Activated naive CD4-positive, alpha-beta T cell treated with anti-CD3 and anti-CD28 coated beads for 36 hours (primary cell): ENCODE measurements at regions of chr5 and their contacts with region 1.

Region 1: DNA sequence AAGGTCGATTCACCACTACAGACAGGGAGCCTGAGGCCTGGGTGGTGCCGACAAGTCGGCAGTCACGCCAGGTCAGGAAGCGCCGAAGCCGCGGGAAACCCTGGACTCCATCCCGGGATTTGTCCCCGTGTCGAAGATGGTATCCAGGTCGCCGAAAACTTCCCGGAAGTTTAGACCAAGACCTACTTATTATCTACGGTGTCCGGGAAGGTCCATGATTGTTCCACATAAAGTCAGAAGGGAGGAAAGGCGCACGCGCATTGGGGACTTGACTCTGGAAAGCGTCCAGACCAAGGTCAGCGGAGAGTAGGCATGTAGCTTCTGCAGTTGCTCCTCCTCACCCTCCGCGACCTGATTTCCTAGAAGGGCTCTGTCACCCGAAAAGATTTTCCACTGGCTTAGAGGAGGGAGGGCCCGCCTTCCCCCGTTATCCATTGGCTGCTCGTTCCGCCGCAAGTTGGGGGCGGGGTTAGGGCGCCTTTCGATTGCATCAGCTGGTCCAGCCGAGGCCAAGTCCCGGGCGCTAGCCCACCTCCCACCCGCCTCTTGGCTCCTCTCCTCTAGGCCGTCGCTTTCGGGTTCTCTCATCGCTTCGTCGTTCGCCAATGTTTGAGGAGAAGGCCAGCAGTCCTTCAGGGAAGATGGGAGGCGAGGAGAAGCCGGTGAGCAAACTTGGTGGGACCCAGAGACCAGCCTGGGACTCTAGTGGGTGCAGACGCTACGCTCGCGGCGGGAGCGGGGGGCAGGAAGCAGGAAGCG is at the start of gene TARS1:
- DNase-seq: peak; percentile 96
- H3K4me3 Mint-ChIP-seq: no peak within 1 kb of the TSS
- H3K27ac Mint-ChIP-seq: no peak within 1 kb of the TSS
- H3K4me1 Mint-ChIP-seq: peaks cover 29% of the 10 kb centered on the region
- H3K27me3 Mint-ChIP-seq: no peaks in the 10 kb centered on the region
- total RNA-seq, gene TARS1: 244 to 260 TPM

Region 2: GRCh38 chr5:31531888-31532710 is 1908.6 kb before region 1 on chr5 and contains the starts of genes C5orf22 and DROSHA:
- CTCF ChIA-PET with region 1: no interaction called
- intact Hi-C with region 1: loop called (anchors 1 kb)
- DNase-seq: peak; percentile 95
- H3K4me3 Mint-ChIP-seq: peak within 1 kb of the TSS; percentile 87
- H3K27ac Mint-ChIP-seq: peak within 1 kb of the TSS; percentile 80
- H3K4me1 Mint-ChIP-seq: peaks cover 41% of the 10 kb centered on the region
- H3K27me3 Mint-ChIP-seq: no peaks in the 10 kb centered on the region
- total RNA-seq, gene C5orf22: 23.7 to 25.5 TPM
- total RNA-seq, gene DROSHA: 60.7 to 60.9 TPM

Region 3: GRCh38 chr5:32542216-32543059 is 898.2 kb before region 1 on chr5:
- CTCF ChIA-PET with region 1: no interaction called
- intact Hi-C with region 1: loop called (anchors 5 kb)
- DNase-seq: peak; percentile 51
- H3K4me3 Mint-ChIP-seq: no peak overlapping the region
- H3K27ac Mint-ChIP-seq: peak overlapping the region; percentile 79
- H3K4me1 Mint-ChIP-seq: peaks cover 40% of the 10 kb centered on the region
- H3K27me3 Mint-ChIP-seq: no peaks in the 10 kb centered on the region

Region 4: GRCh38 chr5:33588654-33589372 is 148.2 kb after region 1 on chr5:
- CTCF ChIA-PET with region 1: no interaction called
- intact Hi-C with region 1: loop called (anchors 1 kb)
- DNase-seq: peak; percentile 65
- H3K4me3 Mint-ChIP-seq: no peak overlapping the region
- H3K27ac Mint-ChIP-seq: no peak overlapping the region
- H3K4me1 Mint-ChIP-seq: no peaks in the 10 kb centered on the region
- H3K27me3 Mint-ChIP-seq: no peaks in the 10 kb centered on the region

Region 5: GRCh38 chr5:33936004-33936380 is 495.3 kb after region 1 on chr5:
- CTCF ChIA-PET with region 1: interaction called, 21 read pairs
- intact Hi-C with region 1: loop called (anchors 1 kb)
- DNase-seq: peak; percentile 58
- H3K4me3 Mint-ChIP-seq: no peak overlapping the region
- H3K27ac Mint-ChIP-seq: no peak overlapping the region
- H3K4me1 Mint-ChIP-seq: peaks cover 8% of the 10 kb centered on the region
- H3K27me3 Mint-ChIP-seq: peaks cover 46% of the 10 kb centered on the region

Region 6: GRCh38 chr5:34459908-34460307 is 1019.2 kb after region 1 on chr5:
- CTCF ChIA-PET with region 1: no interaction called
- intact Hi-C with region 1: loop called (anchors 1 kb)
- DNase-seq: no peak
- H3K4me3 Mint-ChIP-seq: no peak overlapping the region
- H3K27ac Mint-ChIP-seq: no peak overlapping the region
- H3K4me1 Mint-ChIP-seq: peaks cover under 1% of the 10 kb centered on the region
- H3K27me3 Mint-ChIP-seq: peaks cover 4% of the 10 kb centered on the region